ENCODE measurements at regions of chr10 and their contacts with region 1.

Region 1: DNA sequence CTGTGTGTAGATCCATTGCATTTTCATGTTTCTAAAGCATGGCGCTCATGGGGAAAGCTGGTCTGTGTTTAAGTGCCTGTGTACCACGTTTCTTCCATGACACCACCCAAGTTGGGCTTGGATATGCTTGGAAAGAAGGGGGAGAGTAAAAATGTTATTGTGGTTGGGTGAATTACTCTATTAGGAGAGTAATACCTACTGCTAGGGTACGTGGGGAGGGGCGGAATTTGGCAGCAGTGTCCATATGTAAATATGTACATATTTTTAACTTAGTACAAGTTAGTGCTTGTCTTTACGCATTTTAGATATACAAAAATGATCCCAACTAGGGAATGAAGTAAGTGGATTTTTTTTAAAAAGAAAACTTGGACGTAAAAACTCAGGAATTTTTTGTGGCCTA is 42.9 kb upstream of the SAMD8 start:
- DNase-seq: no peak
- H3K4me3 Mint-ChIP-seq: no peak overlapping the region
- H3K27ac Mint-ChIP-seq: no peak overlapping the region
- H3K4me1 Mint-ChIP-seq: peaks cover 6% of the 10 kb centered on the region
- H3K27me3 Mint-ChIP-seq: no peaks in the 10 kb centered on the region
- CTCF ChIP-seq: no peak

Region 2: GRCh38 chr10:75081379-75081778 is 12.9 kb after region 1 on chr10:
- CTCF ChIA-PET with region 1: no interaction called
- POLR2A ChIA-PET with region 1: no interaction called
- intact Hi-C with region 1: loop called (anchors 1 kb)
- DNase-seq: no peak
- H3K4me3 Mint-ChIP-seq: no peak overlapping the region
- H3K27ac Mint-ChIP-seq: no peak overlapping the region
- H3K4me1 Mint-ChIP-seq: peaks cover 6% of the 10 kb centered on the region
- H3K27me3 Mint-ChIP-seq: no peaks in the 10 kb centered on the region
- CTCF ChIP-seq: no peak